ENCODE measurements at regions of chr1 and their contacts with region 1.

Region 1: DNA sequence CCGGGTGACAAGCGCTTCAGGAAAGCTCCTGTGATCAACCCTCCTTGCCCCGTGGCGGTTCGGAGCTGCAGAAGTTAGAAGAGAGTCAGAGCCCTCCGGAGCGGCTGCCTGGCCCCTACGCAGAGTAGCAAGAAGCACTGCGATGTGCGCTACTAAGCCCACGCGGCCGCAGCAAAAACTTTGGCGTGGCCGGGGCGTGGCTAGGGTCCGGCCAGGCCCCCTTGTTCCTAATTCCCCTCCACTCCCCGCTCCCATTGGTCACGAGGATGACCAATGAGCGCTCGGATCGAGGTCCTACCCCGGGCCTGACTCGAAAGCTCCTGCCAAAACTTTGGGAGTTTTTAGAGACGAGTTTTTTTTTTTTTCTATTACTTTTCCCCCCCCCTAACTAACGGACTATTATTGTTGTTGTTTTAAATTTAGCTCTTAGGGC is at the start of gene HLX:
- DNase-seq: peak; percentile 89
- H3K4me3 ChIP-seq: peak within 1 kb of the TSS; percentile 80 to 87 (median 82)
- H3K27ac ChIP-seq: peak within 1 kb of the TSS; percentile 35
- H3K4me1 ChIP-seq: peaks cover 41% of the 10 kb centered on the region
- H3K27me3 ChIP-seq: peaks cover 6 to 15% of the 10 kb centered on the region in 2 experiments
- CTCF ChIP-seq: no peak
- POLR2A ChIP-seq: no peak
- total RNA-seq, gene HLX: 33.5 and 39.1 TPM in 2 replicates

Region 2: DNA sequence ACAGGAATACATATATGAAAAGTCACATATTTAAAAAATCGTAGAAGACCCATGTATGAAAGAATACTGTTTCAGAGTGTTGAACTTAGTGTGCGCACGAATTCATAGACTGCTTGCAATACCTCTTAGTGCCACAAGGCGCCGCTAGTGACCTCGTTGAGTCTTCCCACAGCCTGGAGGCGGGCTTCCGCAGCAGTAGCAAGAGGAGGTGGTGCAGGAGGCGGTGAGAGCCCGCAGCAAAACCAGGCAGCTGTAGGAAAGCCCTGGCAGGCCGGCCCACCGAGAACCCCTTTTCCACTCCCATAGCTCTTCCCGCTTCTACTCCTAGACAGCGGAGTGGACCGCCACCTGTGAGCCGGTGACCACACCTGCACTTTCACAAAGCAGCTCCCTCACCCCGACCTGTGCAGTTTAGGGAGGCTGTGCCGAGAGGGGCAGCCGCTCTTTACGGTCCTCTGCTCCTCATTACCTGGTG is 68.9 kb before region 1 on chr1:
- CTCF ChIA-PET with region 1: interaction called, 12 read pairs
- POLR2A ChIA-PET with region 1: no interaction called
- dilution Hi-C with region 1: no loop called
- intact Hi-C with region 1: loop called (anchors 1 kb)
- DNase-seq: peak; percentile 82
- H3K4me3 ChIP-seq: no peak overlapping the region
- H3K27ac ChIP-seq: no peak overlapping the region
- H3K4me1 ChIP-seq: peaks cover 8% of the 10 kb centered on the region
- H3K27me3 ChIP-seq: peaks cover 6 to 11% of the 10 kb centered on the region in 2 experiments
- CTCF ChIP-seq: peak; percentile 89 to 95
- POLR2A ChIP-seq: no peak

Region 3: GRCh38 chr1:220894025-220894923 is 15.2 kb after region 1 on chr1:
- CTCF ChIA-PET with region 1: interaction called, 5 read pairs
- POLR2A ChIA-PET with region 1: no interaction called
- dilution Hi-C with region 1: no loop called
- intact Hi-C with region 1: loop called (anchors 2 kb)
- DNase-seq: no peak
- H3K4me3 ChIP-seq: peak overlapping the region; percentile 22 to 44 (median 39)
- H3K27ac ChIP-seq: no peak overlapping the region
- H3K4me1 ChIP-seq: peaks cover 15% of the 10 kb centered on the region
- H3K27me3 ChIP-seq: peaks cover 72 to 73% of the 10 kb centered on the region in 2 experiments
- CTCF ChIP-seq: no peak
- POLR2A ChIP-seq: no peak

Region 4: DNA sequence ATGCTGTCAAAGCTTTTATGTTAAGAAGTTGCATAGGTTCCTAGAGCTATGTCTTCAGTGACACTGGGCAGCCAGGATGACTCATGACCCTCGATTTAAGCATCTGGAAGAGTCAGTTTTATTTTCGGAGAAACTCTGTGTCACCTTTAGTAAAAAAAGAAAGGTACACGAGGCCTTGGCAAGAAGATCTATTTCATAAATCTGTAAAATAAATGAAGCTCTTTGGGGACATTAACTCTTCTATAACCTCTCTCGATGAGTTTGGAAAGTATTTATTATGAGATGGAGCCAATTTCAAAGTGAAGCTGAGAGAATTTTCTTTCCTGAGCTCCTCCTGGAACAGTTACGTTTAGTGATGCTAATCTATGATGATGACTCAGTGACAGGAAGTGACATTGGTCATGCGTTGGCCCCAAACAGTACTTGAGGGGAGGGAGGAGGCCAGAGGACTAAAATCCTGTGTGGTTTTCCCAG is 156.6 kb after region 1 on chr1:
- CTCF ChIA-PET with region 1: interaction called, 3 read pairs
- POLR2A ChIA-PET with region 1: no interaction called
- dilution Hi-C with region 1: no loop called
- intact Hi-C with region 1: loop called (anchors 1 kb)
- DNase-seq: peak; percentile 84
- H3K4me3 ChIP-seq: peak overlapping the region in 1 of 3 experiments; percentile 42
- H3K27ac ChIP-seq: peak overlapping the region; percentile 69
- H3K4me1 ChIP-seq: peaks cover 48% of the 10 kb centered on the region
- H3K27me3 ChIP-seq: no peaks in the 10 kb centered on the region
- CTCF ChIP-seq: no peak
- POLR2A ChIP-seq: no peak

Region 5: DNA sequence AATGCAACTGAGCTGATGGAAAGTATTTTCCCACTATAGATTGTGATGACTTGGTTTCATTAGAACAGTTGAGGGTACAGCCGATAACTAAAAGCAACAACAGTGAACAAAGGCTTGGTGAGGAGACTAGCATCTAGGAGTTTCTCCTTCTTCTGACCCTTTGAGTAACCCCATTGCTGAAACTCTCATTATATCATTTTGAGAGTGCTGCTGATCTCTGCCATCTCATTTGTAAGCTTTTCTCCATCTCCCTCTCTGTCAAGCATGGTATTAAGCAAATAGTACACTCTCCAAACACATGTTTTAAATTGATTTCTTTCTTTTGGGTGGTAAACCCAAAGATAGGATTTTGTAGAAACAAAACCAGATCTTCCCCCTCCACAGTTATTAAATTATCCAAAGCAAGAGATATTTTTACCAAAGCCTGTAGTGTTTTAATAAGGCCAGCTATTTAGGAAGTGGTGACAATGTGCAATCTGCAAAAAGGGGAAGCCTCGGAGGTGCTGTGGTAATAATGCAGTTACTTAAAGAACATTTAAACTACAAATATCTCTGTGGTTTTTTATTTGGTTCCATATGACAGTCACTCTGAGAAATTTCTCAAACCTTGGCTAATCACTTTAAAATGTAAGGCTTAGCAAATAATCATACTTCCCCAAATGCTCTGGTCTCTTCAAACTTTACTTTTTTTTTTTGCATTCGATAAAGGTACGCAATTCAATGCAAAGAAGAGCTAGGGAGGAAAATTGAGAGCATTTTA is 287.6 kb after region 1 on chr1:
- CTCF ChIA-PET with region 1: interaction called, 4 read pairs
- POLR2A ChIA-PET with region 1: no interaction called
- dilution Hi-C with region 1: no loop called
- intact Hi-C with region 1: loop called (anchors 1 kb)
- DNase-seq: no peak
- H3K4me3 ChIP-seq: no peak overlapping the region
- H3K27ac ChIP-seq: no peak overlapping the region
- H3K4me1 ChIP-seq: peaks cover 45% of the 10 kb centered on the region
- H3K27me3 ChIP-seq: no peaks in the 10 kb centered on the region
- CTCF ChIP-seq: no peak
- POLR2A ChIP-seq: no peak

Region 6: GRCh38 chr1:221411283-221411682 is 532.2 kb after region 1 on chr1:
- CTCF ChIA-PET with region 1: interaction called, 4 read pairs
- POLR2A ChIA-PET with region 1: interaction called, 3 read pairs
- dilution Hi-C with region 1: no loop called
- intact Hi-C with region 1: loop called (anchors 1 kb)
- DNase-seq: peak; percentile 85
- H3K4me3 ChIP-seq: no peak overlapping the region
- H3K27ac ChIP-seq: peak overlapping the region; percentile 85
- H3K4me1 ChIP-seq: peaks cover 37% of the 10 kb centered on the region
- H3K27me3 ChIP-seq: peaks cover 0 to 6% of the 10 kb centered on the region in 2 experiments
- CTCF ChIP-seq: no peak
- POLR2A ChIP-seq: no peak

Region 7: GRCh38 chr1:221761354-221762002 is 882.4 kb after region 1 on chr1:
- CTCF ChIA-PET with region 1: no interaction called
- POLR2A ChIA-PET with region 1: no interaction called
- dilution Hi-C with region 1: no loop called
- intact Hi-C with region 1: loop called (anchors 5 kb)
- DNase-seq: no peak
- H3K4me3 ChIP-seq: no peak overlapping the region
- H3K27ac ChIP-seq: peak overlapping the region; percentile 52
- H3K4me1 ChIP-seq: peaks cover 60% of the 10 kb centered on the region
- H3K27me3 ChIP-seq: no peaks in the 10 kb centered on the region
- CTCF ChIP-seq: no peak
- POLR2A ChIP-seq: no peak